HCT116 (cell line): ENCODE measurements at regions of chr12 and their contacts with region 1.

Region 1: GRCh38 chr12:85920324-85920947 is 46.3 kb downstream of the NTS start:
- DNase-seq: peak; percentile 26
- ATAC-seq: peak; percentile 70
- H3K4me3 ChIP-seq: no peak overlapping the region
- H3K27ac ChIP-seq: no peak overlapping the region
- H3K4me1 ChIP-seq: no peaks in the 10 kb centered on the region
- H3K27me3 ChIP-seq: no peaks in the 10 kb centered on the region
- CTCF ChIP-seq: peak; percentile 41 to 61 (median 49); a peak in 4 of 6 replicates
- POLR2A ChIP-seq: no peak
- RAD21 ChIP-seq: peak; percentile 73

Region 2: GRCh38 chr12:85076688-85077430 is 843.6 kb before region 1 on chr12:
- CTCF ChIA-PET with region 1: interaction called, 3 read pairs
- POLR2A ChIA-PET with region 1: no interaction called
- RAD21 ChIA-PET with region 1: no interaction called
- intact Hi-C with region 1: loop called (anchors 5 kb)
- DNase-seq: peak; percentile 81
- ATAC-seq: peak; percentile 99
- H3K4me3 ChIP-seq: no peak overlapping the region
- H3K27ac ChIP-seq: no peak overlapping the region
- H3K4me1 ChIP-seq: peaks cover 0 to 5% of the 10 kb centered on the region in 2 experiments; a peak in 1 of 4 replicates
- H3K27me3 ChIP-seq: no peaks in the 10 kb centered on the region
- CTCF ChIP-seq: peak; percentile 45 to 66 (median 49); a peak in 5 of 6 replicates
- POLR2A ChIP-seq: no peak
- RAD21 ChIP-seq: peak; percentile 77

Region 3: GRCh38 chr12:85468356-85469157 is 451.9 kb before region 1 on chr12:
- CTCF ChIA-PET with region 1: interaction called, 33 read pairs
- POLR2A ChIA-PET with region 1: no interaction called
- RAD21 ChIA-PET with region 1: interaction called, 3 to 7 read pairs
- intact Hi-C with region 1: loop called (anchors 1 kb)
- DNase-seq: peak; percentile 36
- ATAC-seq: peak; percentile 72; the same call in 1 of the 2 replicates
- H3K4me3 ChIP-seq: no peak overlapping the region
- H3K27ac ChIP-seq: no peak overlapping the region
- H3K4me1 ChIP-seq: no peaks in the 10 kb centered on the region
- H3K27me3 ChIP-seq: no peaks in the 10 kb centered on the region
- CTCF ChIP-seq: peak; percentile 72 to 81 (median 73); a peak in 5 of 6 replicates
- POLR2A ChIP-seq: no peak
- RAD21 ChIP-seq: peak; percentile 84

Region 4: DNA sequence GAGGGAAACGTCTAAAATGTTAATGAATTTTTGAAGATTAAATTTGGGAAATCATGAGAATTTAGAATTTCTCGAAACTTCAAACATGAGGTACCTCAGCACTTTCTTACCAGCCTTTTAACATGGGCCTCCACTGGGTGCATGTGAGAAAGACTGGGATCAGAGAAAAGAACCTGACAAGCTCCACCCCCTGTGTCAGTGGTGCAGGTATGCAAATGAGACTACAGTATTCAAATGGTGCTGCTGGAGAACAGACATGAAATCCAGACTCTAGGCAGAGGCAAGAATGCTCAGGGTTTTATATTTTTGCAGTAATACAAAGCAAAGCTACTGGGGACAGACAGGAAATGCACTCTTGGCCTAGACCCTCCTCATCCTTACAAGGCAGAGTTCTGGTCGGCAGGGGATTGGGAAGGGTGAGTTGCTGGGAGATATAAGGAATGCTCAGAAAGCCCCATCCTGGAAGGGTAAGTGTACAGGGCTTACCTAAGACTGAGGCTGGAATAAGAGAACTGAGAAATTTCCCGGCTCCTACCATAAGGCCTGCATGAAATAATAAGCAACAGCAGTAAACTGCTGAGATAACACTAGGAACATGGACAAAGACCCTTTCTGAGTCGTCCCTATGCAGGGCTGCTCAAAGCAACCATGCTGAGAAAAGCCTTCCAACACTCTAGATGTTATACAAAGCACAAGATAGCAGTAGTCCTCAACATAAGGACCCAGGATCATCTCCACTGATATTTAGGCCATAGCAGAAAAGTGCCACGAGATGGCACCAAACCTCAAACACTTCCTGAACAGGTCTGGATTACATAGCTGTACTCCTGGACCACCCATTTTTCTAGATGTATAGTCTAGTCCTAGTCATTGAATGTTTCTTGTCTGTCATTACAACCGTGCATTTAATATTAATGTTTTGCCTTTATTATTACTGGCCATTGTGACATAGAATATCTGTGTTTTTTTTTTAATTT is 345.0 kb before region 1 on chr12:
- CTCF ChIA-PET with region 1: interaction called, 5 read pairs
- POLR2A ChIA-PET with region 1: no interaction called
- RAD21 ChIA-PET with region 1: no interaction called
- intact Hi-C with region 1: loop called (anchors 5 kb)
- DNase-seq: peak; percentile 54
- ATAC-seq: peak; percentile 99
- H3K4me3 ChIP-seq: no peak overlapping the region
- H3K27ac ChIP-seq: no peak overlapping the region
- H3K4me1 ChIP-seq: no peaks in the 10 kb centered on the region
- H3K27me3 ChIP-seq: no peaks in the 10 kb centered on the region
- CTCF ChIP-seq: peak; percentile 68 to 83 (median 70); a peak in 5 of 6 replicates
- POLR2A ChIP-seq: no peak
- RAD21 ChIP-seq: peak; percentile 83

Region 5: DNA sequence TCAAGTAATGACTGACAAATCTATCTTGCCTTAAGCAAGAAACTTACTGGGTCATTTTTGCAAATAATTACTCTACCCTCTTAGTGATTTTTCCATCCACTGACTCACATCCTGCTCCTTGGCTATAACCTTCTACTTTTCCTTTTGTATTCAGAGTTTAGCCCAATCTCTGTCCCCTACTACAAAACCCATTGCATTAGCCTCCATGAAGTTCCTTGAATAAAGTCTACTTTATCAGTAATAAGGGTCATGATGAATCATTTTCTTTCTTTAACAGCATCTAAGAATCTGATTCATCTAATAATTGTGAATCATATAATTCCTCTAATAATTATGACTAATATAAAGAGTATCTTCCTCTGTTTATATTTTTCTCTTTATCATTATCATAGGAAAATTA is 86.3 kb after region 1 on chr12:
- CTCF ChIA-PET with region 1: no interaction called
- POLR2A ChIA-PET with region 1: no interaction called
- RAD21 ChIA-PET with region 1: no interaction called
- intact Hi-C with region 1: no loop called
- DNase-seq: no peak
- ATAC-seq: no peak
- H3K4me3 ChIP-seq: no peak overlapping the region
- H3K27ac ChIP-seq: no peak overlapping the region
- H3K4me1 ChIP-seq: no peaks in the 10 kb centered on the region
- H3K27me3 ChIP-seq: no peaks in the 10 kb centered on the region
- CTCF ChIP-seq: no peak
- POLR2A ChIP-seq: no peak
- RAD21 ChIP-seq: no peak